WTC11 (cell line): ENCODE measurements at regions of chrX and their contacts with region 1.

Region 1: GRCh38 chrX:100615005-100615404 is 21.6 kb downstream of the TSPAN6 start:
- DNase-seq: no peak
- ATAC-seq: peak; percentile 81
- H3K4me3 Mint-ChIP-seq: no peak overlapping the region
- H3K27ac Mint-ChIP-seq: no peak overlapping the region
- H3K4me1 Mint-ChIP-seq: peaks cover 23% of the 10 kb centered on the region
- H3K27me3 Mint-ChIP-seq: no peaks in the 10 kb centered on the region
- CTCF ChIP-seq: no peak

Region 2: DNA sequence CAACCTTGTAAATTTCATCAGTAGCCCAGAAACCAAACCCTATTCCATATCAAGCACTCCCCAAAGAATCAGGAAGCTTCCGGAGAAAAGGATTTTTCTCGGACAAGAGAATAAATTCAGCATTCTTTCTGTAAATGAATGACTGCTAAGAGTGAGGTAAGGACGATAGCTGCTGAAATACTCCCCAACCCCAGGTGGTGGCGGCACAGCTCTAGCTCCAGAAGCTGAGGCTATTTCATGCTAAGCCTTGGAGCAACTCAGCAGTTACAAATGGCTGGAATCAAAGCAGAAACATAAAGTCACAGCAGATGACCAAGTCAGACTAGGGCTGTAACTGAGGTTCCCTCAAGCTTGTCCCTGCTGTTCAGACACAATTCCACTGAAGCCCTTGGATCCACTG is 191.0 kb before region 1 on chrX:
- CTCF ChIA-PET with region 1: interaction called, 11 read pairs
- POLR2A ChIA-PET with region 1: no interaction called
- DNase-seq: peak; percentile 42
- ATAC-seq: peak; percentile 86
- H3K4me3 Mint-ChIP-seq: no peak overlapping the region
- H3K27ac Mint-ChIP-seq: no peak overlapping the region
- H3K4me1 Mint-ChIP-seq: peaks cover 6% of the 10 kb centered on the region
- H3K27me3 Mint-ChIP-seq: peaks cover 3% of the 10 kb centered on the region; the same call in 1 of the 2 replicates
- CTCF ChIP-seq: no peak

Region 3: GRCh38 chrX:100636321-100636991 is 21.5 kb after region 1 on chrX and contains the start of gene TSPAN6:
- CTCF ChIA-PET with region 1: interaction called, 19 read pairs
- POLR2A ChIA-PET with region 1: interaction called, 3 read pairs
- DNase-seq: peak; percentile 78
- ATAC-seq: peak; percentile 98
- H3K4me3 Mint-ChIP-seq: peak within 1 kb of the TSS; percentile 97
- H3K27ac Mint-ChIP-seq: peak within 1 kb of the TSS; percentile 99
- H3K4me1 Mint-ChIP-seq: peaks cover 23% of the 10 kb centered on the region
- H3K27me3 Mint-ChIP-seq: no peaks in the 10 kb centered on the region
- CTCF ChIP-seq: no peak; the same call in 1 of the 2 replicates
- total RNA-seq, gene TSPAN6: 47.0 to 50.5 TPM (median 49.8 TPM) in 3 replicates

Region 4: GRCh38 chrX:100662796-100663195 is 47.8 kb after region 1 on chrX:
- CTCF ChIA-PET with region 1: no interaction called
- POLR2A ChIA-PET with region 1: no interaction called
- DNase-seq: no peak
- ATAC-seq: no peak
- H3K4me3 Mint-ChIP-seq: no peak overlapping the region
- H3K27ac Mint-ChIP-seq: no peak overlapping the region
- H3K4me1 Mint-ChIP-seq: peaks cover 4% of the 10 kb centered on the region; the same call in 1 of the 2 replicates
- H3K27me3 Mint-ChIP-seq: no peaks in the 10 kb centered on the region
- CTCF ChIP-seq: no peak

Region 5: DNA sequence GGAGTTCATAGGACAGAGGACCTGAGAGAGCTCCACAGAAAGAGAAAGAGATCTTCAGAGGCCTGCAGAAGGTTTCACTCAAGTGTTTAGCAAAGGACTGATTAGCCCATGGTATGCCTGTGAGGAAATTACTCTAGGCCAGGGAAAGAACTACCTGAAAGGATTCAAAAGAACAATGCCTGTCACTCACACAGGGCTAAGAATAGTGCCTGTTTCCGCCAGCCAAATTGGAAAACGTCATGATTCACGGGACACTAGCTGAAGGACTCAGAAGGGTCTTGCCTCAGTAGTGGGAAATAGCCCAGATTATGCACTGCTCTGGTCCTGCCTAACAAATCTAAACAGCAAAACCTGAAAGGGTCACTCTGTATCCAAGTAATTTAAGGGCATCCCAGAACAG is 95.8 kb after region 1 on chrX:
- CTCF ChIA-PET with region 1: no interaction called
- POLR2A ChIA-PET with region 1: no interaction called
- DNase-seq: no peak
- ATAC-seq: no peak
- H3K4me3 Mint-ChIP-seq: no peak overlapping the region
- H3K27ac Mint-ChIP-seq: no peak overlapping the region
- H3K4me1 Mint-ChIP-seq: no peaks in the 10 kb centered on the region
- H3K27me3 Mint-ChIP-seq: peaks cover 4% of the 10 kb centered on the region
- CTCF ChIP-seq: no peak